H1 (cell line): ENCODE measurements at regions of chr1 and their contacts with region 1.

Region 1: GRCh38 chr1:206725109-206725963 is 40.6 kb downstream of the MAPKAPK2 start:
- DNase-seq: peak in 1 of 2 experiments; percentile 77
- H3K4me3 ChIP-seq: no peak overlapping the region
- H3K27ac ChIP-seq: no peak overlapping the region
- H3K4me1 ChIP-seq: peaks cover 6 to 13% (median 8%) of the 10 kb centered on the region in 4 experiments
- H3K27me3 ChIP-seq: no peaks in the 10 kb centered on the region
- CTCF ChIP-seq: peak; percentile 64 to 85 (median 77)
- EP300 ChIP-seq: no peak
- POLR2A ChIP-seq: no peak
- RAD21 ChIP-seq: peak; percentile 22 to 46; a peak in 3 of 4 replicates

Region 2: GRCh38 chr1:206658264-206658980 is 66.9 kb before region 1 on chr1:
- CTCF ChIA-PET with region 1: interaction called, 34 read pairs
- POLR2A ChIA-PET with region 1: interaction called, 3 read pairs
- DNase-seq: peak in 1 of 2 experiments; percentile 93
- H3K4me3 ChIP-seq: peak overlapping the region in 1 of 4 experiments; percentile 51; a peak in 2 of 8 replicates
- H3K27ac ChIP-seq: no peak overlapping the region
- H3K4me1 ChIP-seq: peaks cover 0 to 12% (median 5%) of the 10 kb centered on the region in 4 experiments; a peak in 6 of 7 replicates
- H3K27me3 ChIP-seq: peaks cover 0 to 17% (median 10%) of the 10 kb centered on the region in 4 experiments; a peak in 6 of 7 replicates
- CTCF ChIP-seq: peak; percentile 83 to 86 (median 84)
- EP300 ChIP-seq: no peak
- POLR2A ChIP-seq: no peak
- RAD21 ChIP-seq: peak; percentile 56 to 63

Region 3: GRCh38 chr1:206693029-206693428 is 32.3 kb before region 1 on chr1:
- CTCF ChIA-PET with region 1: interaction called, 73 read pairs
- POLR2A ChIA-PET with region 1: interaction called, 4 read pairs
- DNase-seq: no peak
- H3K4me3 ChIP-seq: no peak overlapping the region
- H3K27ac ChIP-seq: no peak overlapping the region
- H3K4me1 ChIP-seq: peaks cover 8 to 27% (median 23%) of the 10 kb centered on the region in 4 experiments
- H3K27me3 ChIP-seq: no peaks in the 10 kb centered on the region; a peak in 2 of 7 replicates
- CTCF ChIP-seq: no peak
- EP300 ChIP-seq: no peak
- POLR2A ChIP-seq: no peak
- RAD21 ChIP-seq: no peak

Region 4: GRCh38 chr1:206714331-206715058 is 10.8 kb before region 1 on chr1:
- CTCF ChIA-PET with region 1: interaction called, 77 read pairs
- POLR2A ChIA-PET with region 1: no interaction called
- DNase-seq: no peak
- H3K4me3 ChIP-seq: no peak overlapping the region
- H3K27ac ChIP-seq: no peak overlapping the region
- H3K4me1 ChIP-seq: no peaks in the 10 kb centered on the region
- H3K27me3 ChIP-seq: no peaks in the 10 kb centered on the region
- CTCF ChIP-seq: no peak
- EP300 ChIP-seq: no peak
- POLR2A ChIP-seq: no peak
- RAD21 ChIP-seq: no peak

Region 5: DNA sequence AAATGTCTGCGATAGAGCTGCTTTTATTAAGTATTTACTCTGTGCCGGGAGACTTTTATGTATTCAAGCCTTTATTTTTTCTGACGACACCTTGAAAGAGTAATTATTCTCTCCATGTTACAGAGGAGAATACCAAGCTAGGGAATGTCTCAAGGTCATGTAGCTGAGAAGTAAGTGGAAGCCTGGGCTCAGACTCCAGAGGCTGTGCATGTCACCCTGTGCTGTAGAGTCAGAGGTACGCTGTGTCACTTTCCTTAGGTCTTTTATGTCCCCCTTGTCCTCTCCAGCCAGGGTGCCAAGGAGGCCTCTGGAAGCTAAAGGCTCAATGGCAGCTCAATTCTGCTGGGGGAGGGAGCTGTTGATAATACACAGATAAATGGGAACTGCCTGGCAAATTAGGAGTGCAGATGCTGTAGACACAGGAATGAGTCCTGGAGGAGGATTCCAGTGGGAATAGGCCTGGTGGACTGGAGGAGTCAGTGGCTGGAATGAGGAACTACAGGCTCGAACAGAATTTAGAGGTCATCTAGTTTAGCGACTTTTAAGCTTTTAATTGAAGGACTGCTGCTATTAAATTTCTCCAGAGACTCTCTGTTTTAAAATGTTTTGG is 35.9 kb after region 1 on chr1:
- CTCF ChIA-PET with region 1: interaction called, 13 read pairs
- POLR2A ChIA-PET with region 1: no interaction called
- DNase-seq: no peak
- H3K4me3 ChIP-seq: no peak overlapping the region
- H3K27ac ChIP-seq: no peak overlapping the region
- H3K4me1 ChIP-seq: no peaks in the 10 kb centered on the region
- H3K27me3 ChIP-seq: no peaks in the 10 kb centered on the region; a peak in 1 of 7 replicates
- CTCF ChIP-seq: peak in 1 of 3 experiments; percentile 39; a peak in 2 of 4 replicates
- EP300 ChIP-seq: no peak
- POLR2A ChIP-seq: no peak
- RAD21 ChIP-seq: no peak

Region 6: GRCh38 chr1:206878456-206878855 is 153.1 kb after region 1 on chr1:
- CTCF ChIA-PET with region 1: no interaction called
- POLR2A ChIA-PET with region 1: no interaction called
- DNase-seq: no peak
- H3K4me3 ChIP-seq: no peak overlapping the region
- H3K27ac ChIP-seq: no peak overlapping the region
- H3K4me1 ChIP-seq: no peaks in the 10 kb centered on the region
- H3K27me3 ChIP-seq: no peaks in the 10 kb centered on the region
- CTCF ChIP-seq: peak in 1 of 3 experiments; percentile 30; a peak in 1 of 4 replicates
- EP300 ChIP-seq: no peak
- POLR2A ChIP-seq: no peak
- RAD21 ChIP-seq: no peak

Region 7: DNA sequence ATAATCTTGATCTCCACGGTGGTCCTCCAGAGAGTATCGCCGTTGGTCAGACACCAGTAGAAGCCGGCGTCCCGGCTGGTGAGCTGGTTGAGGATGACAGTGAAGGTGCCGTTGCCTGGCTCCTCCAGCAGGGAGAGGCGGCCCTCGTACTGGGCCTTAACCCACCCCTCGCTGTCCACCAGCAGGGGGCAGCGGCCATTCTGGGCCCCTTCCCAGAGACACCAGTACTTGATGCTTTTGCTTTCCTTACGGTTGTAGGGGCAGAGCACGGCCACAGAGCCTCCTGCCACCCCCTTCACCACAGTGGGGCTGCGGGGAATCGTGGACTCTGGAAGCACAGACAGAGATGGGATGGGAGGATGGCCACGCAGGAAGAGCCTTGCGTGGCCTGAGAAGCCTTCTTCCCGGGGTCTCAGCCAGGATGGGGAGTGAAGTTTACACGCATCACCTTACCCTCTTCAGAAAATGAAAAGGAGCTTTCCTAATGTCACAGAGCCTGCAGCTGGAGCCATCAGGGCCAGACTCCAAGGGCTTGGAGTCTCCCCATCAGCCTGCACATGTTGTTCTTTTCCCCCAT is 210.2 kb after region 1 on chr1:
- CTCF ChIA-PET with region 1: interaction called, 10 read pairs
- POLR2A ChIA-PET with region 1: no interaction called
- DNase-seq: peak; percentile 58 to 83
- H3K4me3 ChIP-seq: no peak overlapping the region
- H3K27ac ChIP-seq: no peak overlapping the region
- H3K4me1 ChIP-seq: no peaks in the 10 kb centered on the region
- H3K27me3 ChIP-seq: no peaks in the 10 kb centered on the region
- CTCF ChIP-seq: peak; percentile 88 to 99 (median 88)
- EP300 ChIP-seq: no peak
- POLR2A ChIP-seq: no peak
- RAD21 ChIP-seq: peak; percentile 50 to 65